ENCODE measurements at regions of chr5 and their contacts with region 1.

Region 1: DNA sequence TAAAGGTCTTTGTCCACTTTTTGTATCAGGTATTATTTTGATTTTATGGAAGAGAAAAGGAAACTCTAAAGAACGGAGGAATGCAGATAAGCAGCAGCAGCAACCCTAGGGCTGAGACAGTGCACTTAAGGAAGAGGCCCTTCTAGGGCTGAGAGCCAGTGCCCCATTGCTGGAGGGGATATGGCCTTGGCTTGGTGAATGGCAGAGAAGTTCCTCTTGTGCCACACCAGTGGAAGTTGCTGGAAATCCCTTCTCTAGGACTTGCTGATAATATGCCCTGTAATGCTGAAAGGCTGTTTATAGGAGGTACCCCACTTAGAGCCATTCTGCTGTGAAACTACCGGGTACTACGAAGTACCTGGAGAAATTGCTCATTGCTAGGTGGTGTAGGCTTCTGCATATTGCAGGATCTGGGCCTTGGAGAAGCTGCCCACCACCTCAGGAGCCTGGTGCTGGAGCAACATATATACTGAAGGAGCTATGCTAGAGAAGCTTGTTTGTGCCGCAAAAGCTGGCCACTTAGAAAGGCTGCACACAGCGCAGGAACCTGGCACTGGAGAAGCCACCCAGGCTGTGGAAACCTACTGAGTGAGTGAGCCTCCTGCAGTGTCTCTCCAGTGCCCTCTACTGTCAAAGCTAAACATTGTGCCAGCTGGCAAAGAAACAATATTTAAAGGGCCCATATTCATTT is 9.6 kb upstream of the UBTD2 start:
- DNase-seq: peak; percentile 71
- ATAC-seq: peak; percentile 99
- H3K4me3 ChIP-seq: no peak overlapping the region
- H3K4me3 Mint-ChIP-seq: no peak overlapping the region
- H3K27ac ChIP-seq: no peak overlapping the region
- H3K27ac Mint-ChIP-seq: no peak overlapping the region
- H3K4me1 ChIP-seq: no peaks in the 10 kb centered on the region
- H3K4me1 Mint-ChIP-seq: peaks cover 3% of the 10 kb centered on the region
- H3K27me3 ChIP-seq: no peaks in the 10 kb centered on the region
- H3K27me3 Mint-ChIP-seq: peaks cover 8% of the 10 kb centered on the region
- CTCF ChIP-seq: peak; percentile 85

Region 2: DNA sequence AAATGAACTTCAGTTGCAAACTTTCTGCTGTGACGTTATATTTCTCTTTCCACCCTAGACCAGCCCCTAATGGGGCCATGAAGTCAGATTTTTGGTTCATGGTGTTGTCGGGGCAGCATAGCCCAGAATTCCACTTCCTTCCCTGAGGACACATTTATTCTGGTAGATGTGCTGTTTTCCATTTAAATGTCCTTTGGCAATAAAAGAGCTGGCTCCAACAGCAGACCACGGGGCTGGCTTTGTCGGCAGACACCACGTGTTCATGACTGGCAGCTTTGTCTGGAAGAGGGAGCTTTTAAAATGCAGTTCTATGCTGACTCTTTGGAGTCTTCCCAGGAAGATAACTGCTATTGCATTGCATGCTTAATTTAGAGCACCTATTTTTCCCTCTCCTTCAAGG is 1978.0 kb before region 1 on chr5:
- CTCF ChIA-PET with region 1: no interaction called
- POLR2A ChIA-PET with region 1: no interaction called
- intact Hi-C with region 1: no loop called
- DNase-seq: no peak
- ATAC-seq: no peak
- H3K4me3 ChIP-seq: no peak overlapping the region
- H3K4me3 Mint-ChIP-seq: no peak overlapping the region
- H3K27ac ChIP-seq: no peak overlapping the region
- H3K27ac Mint-ChIP-seq: no peak overlapping the region
- H3K4me1 ChIP-seq: peaks cover 14 to 22% of the 10 kb centered on the region in 2 donors
- H3K4me1 Mint-ChIP-seq: peaks cover 13% of the 10 kb centered on the region
- H3K27me3 ChIP-seq: peaks cover 0 to 7% (median 0%) of the 10 kb centered on the region in 4 experiments
- H3K27me3 Mint-ChIP-seq: peaks cover 16% of the 10 kb centered on the region
- CTCF ChIP-seq: no peak

Region 3: DNA sequence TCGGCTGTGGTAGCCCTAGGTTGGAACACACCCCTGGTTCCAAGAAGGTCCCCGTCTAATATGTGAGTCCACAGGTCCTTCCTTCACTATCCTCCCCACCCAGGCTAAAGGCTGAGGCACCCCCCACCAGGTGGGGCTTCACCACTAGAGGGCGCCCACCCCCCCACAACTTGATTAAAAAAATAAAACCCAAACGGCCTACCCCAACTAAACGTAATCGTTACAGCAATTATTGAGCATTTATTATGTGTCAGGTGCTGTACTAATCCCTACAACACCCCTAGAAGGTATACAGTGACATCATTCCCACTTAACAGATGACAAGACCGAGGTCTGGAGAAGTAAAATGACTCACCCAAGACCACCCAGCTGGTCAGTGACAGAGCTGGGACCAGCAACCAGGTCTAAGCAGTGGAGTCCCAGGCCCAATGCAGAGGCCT is 808.7 kb before region 1 on chr5:
- CTCF ChIA-PET with region 1: interaction called, 3 read pairs
- POLR2A ChIA-PET with region 1: no interaction called
- intact Hi-C with region 1: loop called (anchors 10 kb)
- DNase-seq: peak; percentile 52
- ATAC-seq: no peak
- H3K4me3 ChIP-seq: no peak overlapping the region
- H3K4me3 Mint-ChIP-seq: no peak overlapping the region
- H3K27ac ChIP-seq: no peak overlapping the region
- H3K27ac Mint-ChIP-seq: no peak overlapping the region
- H3K4me1 ChIP-seq: peaks cover 0 to under 1% of the 10 kb centered on the region in 2 donors
- H3K4me1 Mint-ChIP-seq: peaks cover 2% of the 10 kb centered on the region
- H3K27me3 ChIP-seq: peaks cover 0 to 4% (median 0%) of the 10 kb centered on the region in 4 experiments
- H3K27me3 Mint-ChIP-seq: peaks cover 32% of the 10 kb centered on the region
- CTCF ChIP-seq: peak; percentile 76

Region 4: DNA sequence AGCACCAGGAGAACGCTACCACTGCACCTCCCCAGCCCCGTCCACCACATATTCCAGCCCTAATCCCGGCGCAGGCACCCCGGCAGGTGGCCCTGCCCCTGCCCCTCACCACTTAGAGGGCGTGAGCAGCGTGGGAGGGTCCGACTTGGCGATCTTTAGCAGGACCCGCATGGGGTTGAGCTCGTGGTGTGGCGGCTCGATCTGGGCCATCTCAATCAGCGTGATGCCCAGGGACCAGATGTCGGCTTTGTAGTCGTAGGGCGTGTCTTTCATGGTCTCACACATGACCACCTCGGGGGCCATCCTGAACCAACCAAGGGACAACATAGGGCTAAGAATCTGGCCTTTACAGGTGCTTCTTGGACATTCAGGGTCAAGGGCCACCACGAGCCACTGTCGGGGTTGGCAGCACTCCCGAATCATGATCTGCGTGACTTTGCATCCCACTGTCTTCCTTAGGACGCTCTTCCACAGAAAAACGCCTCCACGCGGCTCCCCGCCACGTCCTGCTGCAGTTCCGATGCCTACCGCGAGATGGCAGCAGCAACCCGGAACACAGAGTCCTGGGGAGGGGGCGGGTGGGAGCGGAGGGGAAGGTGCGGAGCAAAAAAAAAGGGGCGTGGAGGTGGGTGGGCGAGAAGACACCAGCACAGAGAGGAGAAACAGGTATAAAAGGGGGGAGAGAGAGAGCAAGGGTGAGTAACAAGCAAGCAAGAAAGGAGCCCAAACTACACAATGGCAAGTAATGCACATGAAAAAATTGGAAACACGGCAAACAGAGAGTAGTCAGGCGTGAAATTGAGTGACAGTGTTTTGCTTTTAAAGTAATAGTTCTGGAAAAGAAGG is 186.5 kb before region 1 on chr5:
- CTCF ChIA-PET with region 1: interaction called, 19 read pairs
- POLR2A ChIA-PET with region 1: no interaction called
- intact Hi-C with region 1: loop called (anchors 1 kb)
- DNase-seq: peak; percentile 76
- ATAC-seq: no peak
- H3K4me3 ChIP-seq: no peak overlapping the region
- H3K4me3 Mint-ChIP-seq: no peak overlapping the region
- H3K27ac ChIP-seq: peak overlapping the region in 1 of 2 donors; percentile 41
- H3K27ac Mint-ChIP-seq: peak overlapping the region; percentile 70
- H3K4me1 ChIP-seq: peaks cover 31 to 40% of the 10 kb centered on the region in 2 donors
- H3K4me1 Mint-ChIP-seq: peaks cover 35% of the 10 kb centered on the region
- H3K27me3 ChIP-seq: no peaks in the 10 kb centered on the region
- H3K27me3 Mint-ChIP-seq: no peaks in the 10 kb centered on the region
- CTCF ChIP-seq: peak; percentile 92

Measured in B cell (primary cell).